ENCODE measurements at regions of chr4 and their contacts with region 1.

Region 1: GRCh38 chr4:174365018-174365587 is 81.4 kb downstream of the CEP44 start:
- DNase-seq: no peak
- H3K4me3 ChIP-seq: no peak overlapping the region
- H3K27ac ChIP-seq: no peak overlapping the region
- H3K27me3 ChIP-seq: no peaks in the 10 kb centered on the region
- CTCF ChIP-seq: peak; percentile 51 to 91 (median 74)

Region 2: DNA sequence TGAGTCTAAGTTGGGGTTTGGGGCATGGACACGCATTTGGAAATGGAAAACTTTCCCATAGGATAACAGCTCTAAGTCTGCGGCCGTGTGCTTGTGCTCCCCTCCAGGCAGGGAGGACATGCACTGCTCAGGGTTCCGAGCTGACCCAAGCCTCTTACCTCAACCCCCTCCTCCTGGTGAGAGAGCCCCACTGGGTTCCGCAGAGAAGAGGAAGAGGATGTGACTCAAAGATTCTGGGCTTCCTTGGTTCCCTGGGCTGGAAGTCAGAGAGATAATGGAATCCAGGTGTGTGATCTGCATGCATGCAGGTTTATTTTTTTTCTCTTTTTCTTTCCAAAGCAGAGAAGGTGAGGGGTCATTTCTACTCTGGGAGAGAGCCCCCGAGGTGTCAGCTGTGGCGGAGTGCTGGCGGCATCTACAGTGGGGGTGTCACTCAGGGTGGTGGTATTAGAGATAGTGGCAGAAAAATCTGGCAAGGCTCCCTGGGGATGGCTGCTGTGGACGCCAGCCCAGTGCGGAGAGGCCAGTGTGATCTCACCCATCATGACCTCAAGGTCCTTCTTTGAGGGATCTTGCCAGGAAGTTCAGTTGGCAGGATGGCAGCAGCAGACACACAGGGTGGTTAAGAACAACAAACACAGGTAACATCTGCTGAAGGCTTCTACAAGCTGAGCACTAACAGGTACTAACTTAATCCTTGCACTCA is 666.4 kb before region 1 on chr4:
- intact Hi-C with region 1: no loop called
- DNase-seq: no peak
- H3K4me3 ChIP-seq: no peak overlapping the region
- H3K27ac ChIP-seq: no peak overlapping the region
- H3K27me3 ChIP-seq: peaks cover 0 to 5% (median 0%) of the 10 kb centered on the region in 45 donors
- CTCF ChIP-seq: no peak

Region 3: GRCh38 chr4:174522183-174523048 is 157.3 kb after region 1 on chr4 and contains the start of gene HPGD:
- intact Hi-C with region 1: loop called in 1 of 2 experiments (anchors 5 kb)
- DNase-seq: peak in 3 of 10 donors; percentile 11 to 47 (median 44)
- H3K4me3 ChIP-seq: peak within 1 kb of the TSS; percentile 34 to 81 (median 65)
- H3K27ac ChIP-seq: peak within 1 kb of the TSS in 1 of 59 donors; percentile 22
- H3K27me3 ChIP-seq: peaks cover 0 to 51% (median 10%) of the 10 kb centered on the region in 45 donors
- CTCF ChIP-seq: no peak
- total RNA-seq, gene HPGD: 0.13 to 4.6 (median 1.1) TPM in 113 of 120 experiments, not detected in the others

Region 4: GRCh38 chr4:174631901-174632758 is 267.0 kb after region 1 on chr4:
- intact Hi-C with region 1: loop called (anchors 2 to 5 kb)
- DNase-seq: no peak
- H3K4me3 ChIP-seq: peak overlapping the region in 12 of 59 donors; percentile 8 to 39 (median 21)
- H3K27ac ChIP-seq: no peak overlapping the region
- H3K27me3 ChIP-seq: no peaks in the 10 kb centered on the region
- CTCF ChIP-seq: peak; percentile 58 to 88 (median 74)

Region 5: GRCh38 chr4:174714393-174715211 is 349.5 kb after region 1 on chr4:
- intact Hi-C with region 1: loop called in 1 of 2 experiments (anchors 10 kb)
- DNase-seq: no peak
- H3K4me3 ChIP-seq: no peak overlapping the region
- H3K27ac ChIP-seq: no peak overlapping the region
- H3K27me3 ChIP-seq: peaks cover 0 to 8% (median 0%) of the 10 kb centered on the region in 45 donors
- CTCF ChIP-seq: peak in 52 of 56 donors; percentile 23 to 69 (median 54)